GM13977 (cell line): ENCODE measurements at regions of chr3 and their contacts with region 1.

Region 1: GRCh38 chr3:46378426-46378942 is 7.7 kb downstream of the CCR5 start:
- DNase-seq: peak; percentile 46
- CTCF ChIP-seq: peak; percentile 83

Region 2: DNA sequence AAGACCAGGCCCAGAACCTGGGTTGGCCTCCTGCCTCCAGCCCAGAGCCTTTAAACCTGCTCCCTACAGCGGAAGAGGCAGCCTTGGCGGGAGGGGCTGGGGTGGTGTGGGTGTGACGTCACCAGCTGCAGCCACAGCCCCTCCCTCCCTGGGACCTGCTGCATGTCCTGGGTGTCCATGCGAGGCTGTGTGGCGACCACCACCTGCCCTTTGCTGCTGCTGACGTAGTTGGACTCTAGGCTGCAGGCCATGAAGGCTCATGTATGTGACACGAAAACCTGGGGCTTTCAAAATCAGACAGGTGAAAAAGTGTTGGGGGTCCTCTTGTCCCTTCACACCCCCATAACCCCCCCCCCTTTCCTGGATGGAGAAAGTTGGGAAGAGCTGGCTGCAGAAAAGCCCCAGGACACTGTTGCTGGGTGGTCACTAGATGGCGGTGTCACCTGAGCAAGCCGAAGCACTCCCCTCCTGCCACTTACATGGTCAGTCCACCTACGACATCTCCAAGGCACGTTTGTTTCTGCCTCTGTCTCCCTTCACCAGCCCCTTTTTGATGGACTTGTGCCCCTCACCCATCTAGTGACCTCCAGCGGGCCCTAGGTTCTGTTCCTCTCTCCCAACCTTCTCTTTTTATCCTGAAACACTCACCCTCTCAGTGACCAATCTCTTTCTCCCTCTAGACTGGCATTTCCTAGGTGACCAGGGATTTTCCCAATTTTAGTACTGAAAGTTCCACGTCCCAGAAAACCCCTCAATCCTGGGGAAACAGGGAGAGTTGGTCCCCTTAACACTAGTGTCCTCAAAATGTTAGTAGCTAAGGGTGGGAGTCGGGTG is 617.4 kb before region 1 on chr3:
- in situ Hi-C with region 1: loop called (anchors 25 kb)
- DNase-seq: peak; percentile 87
- CTCF ChIP-seq: peak; percentile 88

Region 3: DNA sequence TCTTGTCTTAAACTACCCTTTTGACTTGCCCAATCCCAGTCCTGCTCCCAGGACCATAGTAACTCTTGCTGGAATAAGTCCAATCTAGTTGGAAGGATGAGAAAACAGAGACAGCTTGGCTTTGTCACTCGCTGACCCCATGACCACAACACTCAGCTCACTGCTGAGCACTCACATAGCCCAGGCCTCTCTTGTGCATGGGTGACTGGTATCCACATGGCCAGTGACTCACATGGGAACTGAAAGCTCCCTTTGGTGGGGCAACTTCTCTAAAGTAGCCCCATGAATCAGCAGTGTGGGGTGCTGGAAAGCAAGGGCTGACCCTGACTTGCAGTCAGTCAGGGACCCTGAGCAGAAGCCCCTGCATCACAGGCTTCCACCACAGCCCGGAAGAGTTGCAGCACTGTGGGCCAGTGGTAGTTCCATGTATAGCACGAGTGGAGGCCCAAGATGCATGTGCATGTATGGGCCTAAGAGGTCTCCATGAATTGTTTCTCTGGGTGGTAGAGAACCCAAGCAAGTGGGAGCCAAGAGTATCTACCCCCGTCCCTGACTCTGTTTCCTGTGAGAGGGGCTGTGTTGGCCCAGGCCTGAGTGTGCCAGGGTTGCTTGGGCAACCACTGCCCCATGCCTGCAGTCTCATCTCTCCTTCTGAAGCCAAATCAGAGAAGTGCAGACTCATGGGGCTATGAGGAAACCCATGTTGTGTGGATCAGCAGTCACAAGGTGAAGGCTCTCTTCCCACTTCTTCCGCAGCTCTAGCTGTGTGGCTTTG is 289.1 kb before region 1 on chr3:
- in situ Hi-C with region 1: loop called (anchors 10 kb)
- DNase-seq: peak; percentile 45
- CTCF ChIP-seq: no peak